Activated CD4-positive, alpha-beta T cell treated with anti-CD3 and anti-CD28 coated beads, Interleukin-2, amount 10 ng/mL, durations not matched to agents 24 days and 14 days (primary cell): ENCODE measurements at regions of chr12 and their contacts with region 1.

Region 1: DNA sequence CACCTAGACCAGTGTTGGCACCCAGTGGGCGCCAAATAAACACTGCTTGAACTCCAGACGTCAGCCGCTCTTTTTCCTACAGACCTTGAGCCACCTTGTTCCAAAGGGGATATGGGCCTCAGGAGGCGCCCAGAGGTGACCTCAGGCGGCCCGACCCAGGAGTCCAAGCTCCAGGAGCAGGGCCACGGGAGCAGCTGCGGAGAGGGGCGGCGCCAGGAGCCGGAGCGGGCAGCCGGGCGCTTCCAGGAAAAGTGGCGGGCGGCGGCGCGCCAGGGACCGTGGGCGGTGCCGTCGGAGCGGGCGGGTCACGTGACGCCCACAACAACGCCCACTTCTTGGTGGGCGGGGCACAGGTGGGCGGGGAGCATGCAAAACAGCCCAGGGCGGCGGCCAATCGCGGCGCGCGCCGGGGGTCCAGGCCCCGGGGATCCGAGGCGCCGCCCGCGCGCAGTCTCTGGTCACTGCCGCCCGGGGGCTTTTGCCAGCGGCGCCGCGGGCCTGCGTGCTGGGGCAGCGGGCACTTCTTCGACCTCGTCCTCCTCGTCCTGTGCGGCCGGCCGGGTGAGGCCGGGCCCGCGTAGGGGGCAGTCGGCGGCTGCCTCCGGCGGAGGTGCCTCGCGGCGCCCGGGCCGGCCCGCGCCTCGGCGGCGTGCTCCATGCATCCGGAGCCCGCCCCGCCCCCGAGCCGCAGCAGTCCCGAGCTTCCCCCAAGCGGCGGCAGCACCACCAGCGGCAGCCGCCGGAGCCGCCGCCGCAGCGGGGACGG is at the start of gene ORAI1:
- DNase-seq: peak; percentile 99
- H3K4me3 Mint-ChIP-seq: peak within 1 kb of the TSS; percentile 86
- H3K27ac Mint-ChIP-seq: peak within 1 kb of the TSS; percentile 97
- H3K4me1 Mint-ChIP-seq: peaks cover 38% of the 10 kb centered on the region
- H3K27me3 Mint-ChIP-seq: no peaks in the 10 kb centered on the region
- total RNA-seq, gene ORAI1: 58.3 and 61.8 TPM in 2 replicates

Region 2: GRCh38 chr12:120686690-120687577 is 939.3 kb before region 1 on chr12 and contains the start of gene MLEC:
- intact Hi-C with region 1: loop called (anchors 5 kb)
- DNase-seq: peak; percentile 100
- H3K4me3 Mint-ChIP-seq: peak within 1 kb of the TSS; percentile 92
- H3K27ac Mint-ChIP-seq: peak within 1 kb of the TSS; percentile 96
- H3K4me1 Mint-ChIP-seq: peaks cover 53% of the 10 kb centered on the region
- H3K27me3 Mint-ChIP-seq: peaks cover 2% of the 10 kb centered on the region
- total RNA-seq, gene MLEC: 131 and 149 TPM in 2 replicates

Region 3: GRCh38 chr12:121536899-121537813 is 89.1 kb before region 1 on chr12:
- intact Hi-C with region 1: loop called (anchors 1 kb)
- DNase-seq: peak; percentile 84
- H3K4me3 Mint-ChIP-seq: peak overlapping the region; percentile 82
- H3K27ac Mint-ChIP-seq: peak overlapping the region; percentile 72
- H3K4me1 Mint-ChIP-seq: peaks cover 37% of the 10 kb centered on the region
- H3K27me3 Mint-ChIP-seq: peaks cover 1% of the 10 kb centered on the region

Region 4: GRCh38 chr12:121579981-121580868 is 46.0 kb before region 1 on chr12:
- intact Hi-C with region 1: loop called (anchors 1 kb)
- DNase-seq: peak; percentile 93
- H3K4me3 Mint-ChIP-seq: peak overlapping the region; percentile 99
- H3K27ac Mint-ChIP-seq: peak overlapping the region; percentile 99
- H3K4me1 Mint-ChIP-seq: peaks cover 38% of the 10 kb centered on the region
- H3K27me3 Mint-ChIP-seq: no peaks in the 10 kb centered on the region

Region 5: GRCh38 chr12:121637231-121637914 is 11.1 kb after region 1 on chr12:
- intact Hi-C with region 1: loop called (anchors 1 kb)
- DNase-seq: peak; percentile 84
- H3K4me3 Mint-ChIP-seq: peak overlapping the region; percentile 74
- H3K27ac Mint-ChIP-seq: peak overlapping the region; percentile 90
- H3K4me1 Mint-ChIP-seq: peaks cover 40% of the 10 kb centered on the region
- H3K27me3 Mint-ChIP-seq: no peaks in the 10 kb centered on the region

Region 6: DNA sequence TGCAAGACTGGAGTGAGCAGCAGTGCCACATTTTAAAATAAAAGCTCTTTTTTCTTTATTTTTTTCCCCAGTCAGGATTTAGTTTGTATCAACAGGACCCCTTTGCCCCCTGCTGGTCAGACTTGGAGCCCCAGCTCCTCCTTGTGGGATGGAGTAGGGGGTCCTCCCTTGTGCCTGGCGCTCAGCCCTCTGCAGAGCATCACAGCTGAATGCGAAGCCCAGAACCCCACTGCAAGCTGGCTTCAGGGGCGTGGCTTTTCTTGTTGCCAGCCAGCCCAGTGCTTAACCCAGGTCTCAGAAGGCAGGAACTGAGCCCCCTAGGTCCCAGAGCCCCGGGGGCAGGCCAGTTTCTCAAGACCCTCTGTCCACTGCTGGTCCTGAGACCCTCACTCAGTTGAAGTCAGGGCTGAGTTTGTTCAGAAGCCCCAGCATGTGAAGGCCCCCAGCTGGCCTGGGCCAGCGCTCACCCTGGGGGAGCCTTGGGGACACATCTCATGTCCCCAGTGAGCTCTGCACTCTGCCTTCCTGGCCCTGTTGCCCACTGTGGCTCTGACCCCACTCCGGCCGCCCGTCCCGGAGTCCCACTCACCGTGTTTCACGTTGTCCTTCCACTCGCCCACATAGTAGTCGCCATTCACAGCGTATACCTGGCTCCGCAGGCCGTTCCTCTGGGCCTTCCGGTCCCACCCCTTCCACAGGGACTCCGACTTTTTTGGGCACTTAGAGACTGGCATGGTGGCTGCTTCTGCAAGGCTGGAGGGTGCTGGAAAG is 42.7 kb after region 1 on chr12:
- intact Hi-C with region 1: loop called (anchors 1 kb)
- DNase-seq: peak; percentile 85
- H3K4me3 Mint-ChIP-seq: no peak overlapping the region
- H3K27ac Mint-ChIP-seq: peak overlapping the region; percentile 11
- H3K4me1 Mint-ChIP-seq: peaks cover 43% of the 10 kb centered on the region
- H3K27me3 Mint-ChIP-seq: no peaks in the 10 kb centered on the region

Region 7: GRCh38 chr12:121793838-121794533 is 167.7 kb after region 1 on chr12:
- intact Hi-C with region 1: loop called (anchors 2 kb)
- DNase-seq: peak; percentile 99
- H3K4me3 Mint-ChIP-seq: peak overlapping the region; percentile 94
- H3K27ac Mint-ChIP-seq: peak overlapping the region; percentile 92
- H3K4me1 Mint-ChIP-seq: peaks cover 55% of the 10 kb centered on the region
- H3K27me3 Mint-ChIP-seq: no peaks in the 10 kb centered on the region